ENCODE measurements at regions of chr11 and their contacts with region 1.

Region 1: GRCh38 chr11:61446211-61446651 is 16.3 kb downstream of the SDHAF2 start:
- DNase-seq: peak; percentile 90
- ATAC-seq: peak; percentile 98 to 99
- H3K4me3 ChIP-seq: no peak overlapping the region
- H3K27ac ChIP-seq: peak overlapping the region; percentile 44 to 79; a peak in 5 of 6 replicates
- H3K4me1 ChIP-seq: peaks cover 12% of the 10 kb centered on the region
- CTCF ChIP-seq: peak; percentile 91
- EP300 ChIP-seq: no peak
- POLR2A ChIP-seq: no peak
- RAD21 ChIP-seq: peak; percentile 71 to 77

Region 2: GRCh38 chr11:61411589-61411988 is 34.6 kb before region 1 on chr11:
- CTCF ChIA-PET with region 1: no interaction called
- POLR2A ChIA-PET with region 1: no interaction called
- DNase-seq: no peak
- ATAC-seq: 0 out of 6 replicates have a peak, but pooled peaks of 1 of the 2 experiments have one; percentile 19
- H3K4me3 ChIP-seq: no peak overlapping the region
- H3K27ac ChIP-seq: no peak overlapping the region
- H3K4me1 ChIP-seq: no peaks in the 10 kb centered on the region
- CTCF ChIP-seq: no peak
- EP300 ChIP-seq: no peak
- POLR2A ChIP-seq: no peak
- RAD21 ChIP-seq: no peak

Region 3: GRCh38 chr11:61460474-61460881 is 14.2 kb after region 1 on chr11:
- CTCF ChIA-PET with region 1: interaction called, 55 read pairs
- POLR2A ChIA-PET with region 1: interaction called, 6 read pairs
- DNase-seq: no peak
- ATAC-seq: no peak
- H3K4me3 ChIP-seq: no peak overlapping the region
- H3K27ac ChIP-seq: no peak overlapping the region
- H3K4me1 ChIP-seq: no peaks in the 10 kb centered on the region
- CTCF ChIP-seq: no peak
- EP300 ChIP-seq: no peak
- POLR2A ChIP-seq: no peak
- RAD21 ChIP-seq: no peak

Region 4: GRCh38 chr11:61468002-61468401 is 21.8 kb after region 1 on chr11:
- CTCF ChIA-PET with region 1: interaction called, 59 read pairs
- POLR2A ChIA-PET with region 1: no interaction called
- DNase-seq: no peak
- ATAC-seq: no peak
- H3K4me3 ChIP-seq: no peak overlapping the region
- H3K27ac ChIP-seq: no peak overlapping the region
- H3K4me1 ChIP-seq: no peaks in the 10 kb centered on the region
- CTCF ChIP-seq: no peak
- EP300 ChIP-seq: no peak
- POLR2A ChIP-seq: no peak
- RAD21 ChIP-seq: no peak